ENCODE measurements at regions of chrX and their contacts with region 1.

Region 1: GRCh38 chrX:132740316-132741123 is 217.9 kb downstream of the HS6ST2 start:
- DNase-seq: no peak
- ATAC-seq: peak in 1 of 4 donors; percentile 51
- H3K4me3 ChIP-seq: no peak overlapping the region
- H3K27ac ChIP-seq: no peak overlapping the region
- H3K4me1 ChIP-seq: no peaks in the 10 kb centered on the region
- H3K27me3 ChIP-seq: peaks cover 0 to 18% (median 0%) of the 10 kb centered on the region in 3 donors
- CTCF ChIP-seq: peak; percentile 66

Region 2: GRCh38 chrX:131955099-131955777 is 785.3 kb before region 1 on chrX:
- intact Hi-C with region 1: no loop called
- DNase-seq: no peak
- ATAC-seq: no peak
- H3K4me3 ChIP-seq: no peak overlapping the region
- H3K27ac ChIP-seq: no peak overlapping the region
- H3K4me1 ChIP-seq: no peaks in the 10 kb centered on the region
- H3K27me3 ChIP-seq: no peaks in the 10 kb centered on the region
- CTCF ChIP-seq: no peak

Region 3: GRCh38 chrX:132532955-132533354 is 207.6 kb before region 1 on chrX:
- intact Hi-C with region 1: no loop called
- DNase-seq: no peak
- ATAC-seq: no peak
- H3K4me3 ChIP-seq: no peak overlapping the region
- H3K27ac ChIP-seq: no peak overlapping the region
- H3K4me1 ChIP-seq: no peaks in the 10 kb centered on the region
- H3K27me3 ChIP-seq: peaks cover 0 to 9% (median 0%) of the 10 kb centered on the region in 3 donors
- CTCF ChIP-seq: no peak

Region 4: GRCh38 chrX:132957211-132958090 is 216.9 kb after region 1 on chrX:
- intact Hi-C with region 1: loop called (anchors 5 to 10 kb)
- DNase-seq: peak in 1 of 2 donors; percentile 18
- ATAC-seq: peak; percentile 39 to 59 (median 43)
- H3K4me3 ChIP-seq: peak overlapping the region; percentile 66
- H3K27ac ChIP-seq: peak overlapping the region; percentile 50
- H3K4me1 ChIP-seq: no peaks in the 10 kb centered on the region
- H3K27me3 ChIP-seq: peaks cover 0 to 50% (median 0%) of the 10 kb centered on the region in 3 donors
- CTCF ChIP-seq: no peak